ENCODE measurements at regions of chr19 and their contacts with region 1.

Region 1: GRCh38 chr19:7903244-7904073 is at the start of gene MAP2K7:
- DNase-seq: peak; percentile 98 to 100 (median 99)
- H3K4me3 ChIP-seq: peak within 1 kb of the TSS; percentile 61 to 99 (median 88)
- H3K27ac ChIP-seq: peak within 1 kb of the TSS in 58 of 59 donors; percentile 54 to 97 (median 90)
- H3K27me3 ChIP-seq: no peaks in the 10 kb centered on the region
- CTCF ChIP-seq: peak; percentile 78 to 99 (median 94)
- total RNA-seq, gene MAP2K7: 28.0 to 51.9 (median 39.4) TPM

Region 2: GRCh38 chr19:7852851-7853769 is 50.3 kb before region 1 on chr19:
- intact Hi-C with region 1: loop called (anchors 1 to 5 kb)
- DNase-seq: peak in 8 of 10 donors; percentile 61 to 83 (median 76)
- H3K4me3 ChIP-seq: peak overlapping the region in 34 of 59 donors; percentile 1 to 55 (median 22)
- H3K27ac ChIP-seq: peak overlapping the region in 58 of 59 donors; percentile 35 to 100 (median 97)
- H3K27me3 ChIP-seq: no peaks in the 10 kb centered on the region
- CTCF ChIP-seq: peak; percentile 49 to 94 (median 82)

Region 3: DNA sequence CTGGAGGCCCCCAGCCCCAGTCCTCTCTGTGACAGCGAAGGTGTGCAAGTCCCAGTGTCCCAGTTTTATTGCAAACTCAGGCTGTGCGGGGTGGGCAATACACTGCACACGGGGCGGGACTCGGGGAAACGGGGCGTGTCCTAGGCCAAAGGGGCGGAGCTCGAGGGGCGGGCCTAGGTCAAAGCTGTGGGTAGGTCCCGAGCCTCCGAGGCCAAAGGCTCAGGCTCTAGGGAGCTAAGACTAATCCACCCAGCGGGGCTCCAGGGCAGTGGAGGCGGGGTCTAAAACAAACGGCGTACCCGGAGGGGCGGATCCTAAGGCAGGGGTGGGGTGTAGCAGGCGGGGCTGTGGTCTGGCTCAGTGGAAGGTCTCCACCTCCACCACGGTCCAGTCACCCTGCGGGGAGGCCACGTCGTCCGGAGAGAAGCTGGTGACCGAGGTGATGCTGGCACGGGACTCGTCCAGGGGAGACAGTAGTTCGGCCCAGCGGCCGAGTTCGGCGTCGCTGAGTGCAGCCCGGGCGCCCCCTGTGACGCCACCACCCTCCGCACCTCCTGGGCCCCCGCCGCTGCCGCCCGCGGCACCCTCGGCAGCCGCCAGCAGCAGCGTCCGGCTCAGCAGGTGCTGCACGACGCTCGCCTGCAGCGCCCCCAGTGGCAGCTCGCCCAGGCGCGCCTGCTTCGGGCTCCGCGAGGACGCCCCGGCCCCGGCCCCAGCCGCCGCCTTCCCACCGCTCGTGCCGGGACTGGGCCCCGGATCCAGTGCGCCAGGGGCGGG is 34.6 kb before region 1 on chr19:
- intact Hi-C with region 1: no loop called
- DNase-seq: peak in 3 of 10 donors; percentile 51 to 79 (median 66)
- H3K4me3 ChIP-seq: peak overlapping the region; percentile 18 to 66 (median 49)
- H3K27ac ChIP-seq: peak overlapping the region in 43 of 59 donors; percentile 9 to 79 (median 46)
- H3K27me3 ChIP-seq: peaks cover 0 to 5% (median 0%) of the 10 kb centered on the region in 45 donors
- CTCF ChIP-seq: peak; percentile 28 to 90 (median 72)

Region 4: DNA sequence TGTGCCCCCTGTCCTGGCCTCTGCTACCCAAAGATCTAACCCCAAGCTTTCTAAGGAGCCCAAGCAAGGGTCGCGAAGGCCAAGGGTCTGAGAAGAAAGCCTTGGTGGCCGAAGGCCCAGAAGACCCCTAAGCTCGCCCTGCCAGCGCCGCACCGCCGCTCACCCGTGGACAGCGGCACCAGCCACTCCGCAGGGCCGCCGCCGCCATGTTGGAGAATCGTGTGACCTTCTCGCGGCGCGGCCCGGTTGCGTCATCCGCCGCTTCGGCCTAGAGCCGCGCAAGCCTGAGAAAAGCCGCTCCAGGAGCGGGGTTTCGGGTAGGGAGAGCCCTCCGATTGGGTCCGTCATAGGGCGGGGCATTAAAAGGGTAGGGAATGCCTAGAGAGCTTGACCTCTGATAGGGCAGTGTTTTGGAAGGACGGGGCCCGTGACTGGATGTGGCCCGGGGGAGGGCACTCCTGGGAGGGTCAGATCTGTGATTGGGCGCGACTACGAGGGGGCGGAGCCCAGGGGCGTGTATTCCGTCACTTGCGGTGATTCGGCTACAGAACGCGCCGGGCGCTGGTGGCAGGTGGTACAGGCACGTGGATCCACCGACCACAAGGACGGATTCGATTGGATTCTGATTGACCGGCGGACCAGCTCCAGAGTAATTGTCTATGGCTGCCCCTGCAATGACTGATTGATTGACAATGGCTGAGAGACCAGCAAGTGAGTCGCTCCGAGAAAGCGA is 40.2 kb after region 1 on chr19 and contains the start of gene TIMM44:
- intact Hi-C with region 1: no loop called
- DNase-seq: peak; percentile 99 to 100 (median 100)
- H3K4me3 ChIP-seq: peak within 1 kb of the TSS; percentile 61 to 100 (median 96)
- H3K27ac ChIP-seq: peak within 1 kb of the TSS; percentile 76 to 99 (median 93)
- H3K27me3 ChIP-seq: no peaks in the 10 kb centered on the region
- CTCF ChIP-seq: peak in 1 of 56 donors; percentile 9
- total RNA-seq, gene TIMM44: 34.5 to 109 (median 53.7) TPM